K562 (cell line): ENCODE measurements at regions of chr20 and their contacts with region 1.

Region 1: DNA sequence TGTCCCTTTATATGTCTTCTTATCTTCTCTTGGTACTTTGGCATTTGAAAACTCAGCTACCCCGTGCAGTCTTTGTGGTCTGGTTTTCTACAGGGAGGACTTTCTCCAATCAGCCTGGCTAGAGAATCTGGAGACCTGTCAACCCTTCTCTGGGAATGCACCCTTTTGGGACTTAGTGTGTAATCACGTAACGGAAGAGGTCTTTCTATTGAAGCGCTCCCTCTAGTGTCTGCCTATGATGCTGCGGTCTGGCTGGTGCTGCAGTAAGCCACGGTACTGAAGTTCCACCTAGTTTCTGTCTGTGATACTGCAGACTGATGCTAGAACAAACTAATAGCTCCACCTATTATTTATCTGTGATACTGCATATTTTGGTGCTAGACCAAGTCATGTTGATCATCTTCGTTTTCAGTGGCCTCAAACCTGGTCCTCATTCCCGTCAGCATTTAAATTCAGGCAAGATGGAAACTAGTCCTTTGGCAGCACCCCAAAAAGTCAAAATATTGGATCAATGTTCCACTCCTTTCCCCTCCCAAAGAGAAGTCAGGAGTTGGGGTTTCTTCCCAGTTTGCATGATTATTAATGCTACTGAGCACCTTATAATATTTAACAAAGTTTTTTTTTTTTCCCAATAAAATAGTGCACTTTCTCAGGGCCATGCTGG is 12.5 kb upstream of the SIRPB2 start:
- DNase-seq: peak; percentile 72 to 82 (median 74)
- ATAC-seq: peak; percentile 100
- H3K4me3 ChIP-seq: no peak overlapping the region
- H3K27ac ChIP-seq: no peak overlapping the region
- H3K4me1 ChIP-seq: no peaks in the 10 kb centered on the region; a peak in 1 of 5 replicates
- H3K27me3 ChIP-seq: 0 out of 5 replicates have a peak, but pooled peaks cover 0 to 6% of the 10 kb centered on the region in 2 experiments
- CTCF ChIP-seq: peak; percentile 96 to 100 (median 100)
- EP300 ChIP-seq: no peak
- POLR2A ChIP-seq: no peak
- RAD21 ChIP-seq: peak; percentile 95

Region 2: DNA sequence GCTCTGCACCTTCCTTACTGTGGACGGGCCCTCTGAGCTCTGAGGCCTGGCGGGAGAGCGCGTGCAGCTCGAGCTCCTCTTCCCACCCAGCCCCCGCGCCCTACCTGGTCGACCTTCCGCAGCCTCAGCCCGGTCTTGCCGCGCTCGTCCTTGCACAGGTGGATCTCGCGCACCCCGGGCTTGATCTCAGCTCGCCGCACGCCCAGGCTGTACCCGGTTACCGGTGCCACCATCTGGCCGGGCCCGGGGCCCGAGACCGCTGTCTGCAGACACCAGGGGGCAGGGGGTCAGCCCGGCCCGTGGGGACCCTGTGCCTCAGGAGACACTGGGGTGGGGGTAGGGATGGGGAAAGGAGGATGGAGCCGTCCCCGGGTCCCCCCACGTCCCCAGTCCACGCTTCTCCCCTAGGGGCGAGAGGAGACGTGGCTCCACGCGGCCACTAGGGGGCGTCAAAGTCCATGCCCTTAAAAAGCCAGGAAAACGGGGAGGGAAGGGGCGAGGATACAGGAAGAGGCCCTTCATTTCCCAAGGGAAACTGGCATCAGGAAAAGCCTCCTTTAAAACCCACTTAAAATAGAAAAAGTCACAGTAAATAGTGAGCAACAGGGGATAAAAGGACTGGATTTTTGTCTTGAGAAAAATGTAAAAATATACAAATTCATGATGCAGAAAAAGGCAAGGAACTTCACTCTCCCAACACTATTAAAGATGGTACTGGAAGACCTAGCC is 190.3 kb before region 1 on chr20:
- CTCF ChIA-PET with region 1: no interaction called
- POLR2A ChIA-PET with region 1: no interaction called
- in situ Hi-C with region 1: no loop called
- intact Hi-C with region 1: loop called (anchors 10 kb)
- DNase-seq: peak; percentile 70 to 75 (median 72)
- ATAC-seq: peak; percentile 87
- H3K4me3 ChIP-seq: no peak overlapping the region
- H3K27ac ChIP-seq: no peak overlapping the region
- H3K4me1 ChIP-seq: peaks cover 0 to 13% of the 10 kb centered on the region in 2 experiments; a peak in 3 of 5 replicates
- H3K27me3 ChIP-seq: no peaks in the 10 kb centered on the region
- CTCF ChIP-seq: peak; percentile 76 to 86 (median 84)
- EP300 ChIP-seq: no peak
- POLR2A ChIP-seq: no peak
- RAD21 ChIP-seq: peak; percentile 55 to 81

Region 3: DNA sequence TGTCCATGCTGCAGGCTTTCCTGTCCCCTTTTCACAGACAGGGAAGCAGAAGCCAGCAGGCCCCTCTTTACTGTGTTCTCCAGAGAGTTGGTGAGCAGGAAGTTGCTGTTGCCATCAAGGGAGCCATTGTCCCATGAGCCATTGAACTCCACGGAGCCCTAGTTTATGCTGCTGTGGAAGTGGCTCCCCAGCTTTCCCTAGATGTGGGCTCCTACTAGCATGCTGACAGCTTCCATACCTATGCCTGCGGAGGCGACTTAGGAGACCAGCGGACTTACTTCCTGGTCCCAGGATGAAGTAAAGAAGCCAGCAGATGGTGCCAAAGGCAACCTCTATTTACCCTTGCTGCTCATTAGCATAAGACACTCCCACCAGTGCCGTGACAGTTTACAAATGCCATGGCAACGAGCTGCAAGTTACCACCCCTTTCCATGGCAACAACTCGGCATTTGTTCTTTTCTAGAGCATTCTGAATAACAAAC is 80.0 kb before region 1 on chr20:
- CTCF ChIA-PET with region 1: interaction called, 11 read pairs
- POLR2A ChIA-PET with region 1: no interaction called
- in situ Hi-C with region 1: no loop called
- intact Hi-C with region 1: no loop called
- DNase-seq: peak; percentile 41 to 84 (median 48)
- ATAC-seq: peak; percentile 99
- H3K4me3 ChIP-seq: no peak overlapping the region
- H3K27ac ChIP-seq: peak overlapping the region; percentile 32
- H3K4me1 ChIP-seq: peaks cover 4 to 15% of the 10 kb centered on the region in 2 experiments; a peak in 3 of 5 replicates
- H3K27me3 ChIP-seq: no peaks in the 10 kb centered on the region
- CTCF ChIP-seq: peak; percentile 58 to 76 (median 69)
- EP300 ChIP-seq: no peak
- POLR2A ChIP-seq: no peak
- RAD21 ChIP-seq: peak; percentile 57 to 74

Region 4: GRCh38 chr20:1466211-1467081 is 37.2 kb before region 1 on chr20 and contains the start of gene NSFL1C:
- CTCF ChIA-PET with region 1: interaction called, 5 read pairs
- POLR2A ChIA-PET with region 1: interaction called, 3 read pairs
- in situ Hi-C with region 1: no loop called
- intact Hi-C with region 1: loop called (anchors 2 kb)
- DNase-seq: peak; percentile 84 to 93 (median 88)
- ATAC-seq: peak; percentile 91
- H3K4me3 ChIP-seq: peak within 1 kb of the TSS; percentile 97
- H3K27ac ChIP-seq: peak within 1 kb of the TSS; percentile 94
- H3K4me1 ChIP-seq: peaks cover 18 to 40% of the 10 kb centered on the region in 2 experiments
- H3K27me3 ChIP-seq: no peaks in the 10 kb centered on the region
- CTCF ChIP-seq: peak; percentile 67 to 88 (median 82)
- EP300 ChIP-seq: no peak; the same call in 1 of the 2 replicates
- POLR2A ChIP-seq: peak; percentile 80
- RAD21 ChIP-seq: peak; percentile 34 to 43; a peak in 3 of 4 replicates
- polyA plus RNA-seq, gene NSFL1C: 39.3 to 47.0 TPM

Region 5: DNA sequence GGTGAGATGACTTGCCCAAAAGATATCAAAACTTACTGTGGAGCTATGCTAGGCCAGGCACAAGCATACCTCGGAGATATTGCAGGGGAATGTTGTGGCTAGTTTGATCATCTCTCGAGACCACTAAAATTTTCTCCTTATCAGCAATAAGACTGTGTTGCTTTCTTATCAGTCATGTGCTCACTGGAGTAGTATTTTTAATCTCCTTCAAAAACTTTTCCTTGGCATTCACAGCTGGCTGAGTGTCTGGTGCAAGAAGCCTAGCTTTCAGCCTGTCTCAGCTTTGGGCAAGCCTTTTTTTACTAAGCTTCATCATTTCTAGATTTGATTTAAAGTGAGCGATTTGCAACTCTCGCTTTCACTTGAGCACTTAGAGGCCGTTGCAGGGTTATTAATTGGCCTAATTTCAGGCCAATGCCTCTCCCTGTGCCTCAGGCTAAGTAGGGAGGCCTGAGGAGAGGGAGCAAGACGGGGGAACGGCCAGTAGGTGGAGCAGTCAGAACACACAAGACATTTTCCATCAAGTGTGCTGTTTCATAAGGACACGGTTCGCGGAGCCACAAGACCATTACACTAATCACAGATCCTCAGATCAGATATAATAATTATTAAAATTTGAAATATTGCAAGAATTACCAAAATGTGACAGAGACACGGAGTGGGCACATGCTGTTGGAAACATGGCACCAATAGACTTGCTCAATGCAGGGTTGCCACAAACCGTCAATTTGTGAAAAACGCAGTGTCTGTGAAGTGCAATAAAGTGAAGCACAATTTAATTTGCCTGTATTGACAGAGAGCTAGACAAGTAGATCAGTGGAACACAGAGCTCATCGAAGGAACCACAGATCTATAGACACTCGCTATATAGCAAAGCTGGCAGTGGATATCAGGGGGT is 260.7 kb after region 1 on chr20:
- CTCF ChIA-PET with region 1: no interaction called
- POLR2A ChIA-PET with region 1: no interaction called
- in situ Hi-C with region 1: loop called (anchors 25 kb)
- intact Hi-C with region 1: no loop called
- DNase-seq: peak; percentile 29 to 65 (median 44)
- ATAC-seq: peak; percentile 91
- H3K4me3 ChIP-seq: no peak overlapping the region
- H3K27ac ChIP-seq: no peak overlapping the region
- H3K4me1 ChIP-seq: no peaks in the 10 kb centered on the region
- H3K27me3 ChIP-seq: no peaks in the 10 kb centered on the region; a peak in 1 of 5 replicates
- CTCF ChIP-seq: peak; percentile 67 to 72 (median 67)
- EP300 ChIP-seq: no peak
- POLR2A ChIP-seq: no peak
- RAD21 ChIP-seq: peak; percentile 54 to 64